WTC11 (cell line): ENCODE measurements at regions of chr1 and their contacts with region 1.

Region 1: DNA sequence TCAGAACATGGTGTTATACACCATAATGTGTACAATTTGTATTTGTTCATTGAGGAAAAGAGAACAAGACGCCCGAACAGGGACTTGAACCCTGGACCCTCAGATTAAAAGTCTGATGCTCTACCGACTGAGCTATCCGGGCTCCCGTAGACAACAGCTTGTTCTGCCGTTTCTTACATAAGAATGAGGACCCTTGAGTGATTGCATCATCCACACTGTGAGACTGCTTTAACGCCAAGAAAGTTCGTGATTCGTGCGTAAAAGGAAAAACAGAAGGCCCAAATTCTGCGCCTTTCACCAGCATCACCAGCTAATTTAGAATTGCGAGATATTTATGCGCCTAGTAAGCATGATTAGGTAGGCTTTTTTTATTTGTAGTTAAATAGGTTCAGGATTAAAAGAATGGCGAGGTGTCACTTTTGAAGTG is 9.2 kb upstream of the MDM4 start:
- DNase-seq: peak; percentile 84
- ATAC-seq: peak; percentile 75
- H3K4me3 Mint-ChIP-seq: peak overlapping the region; percentile 96
- H3K27ac Mint-ChIP-seq: peak overlapping the region; percentile 98
- H3K4me1 Mint-ChIP-seq: peaks cover 11% of the 10 kb centered on the region
- H3K27me3 Mint-ChIP-seq: peaks cover 3% of the 10 kb centered on the region; the same call in 1 of the 2 replicates
- CTCF ChIP-seq: no peak

Region 2: DNA sequence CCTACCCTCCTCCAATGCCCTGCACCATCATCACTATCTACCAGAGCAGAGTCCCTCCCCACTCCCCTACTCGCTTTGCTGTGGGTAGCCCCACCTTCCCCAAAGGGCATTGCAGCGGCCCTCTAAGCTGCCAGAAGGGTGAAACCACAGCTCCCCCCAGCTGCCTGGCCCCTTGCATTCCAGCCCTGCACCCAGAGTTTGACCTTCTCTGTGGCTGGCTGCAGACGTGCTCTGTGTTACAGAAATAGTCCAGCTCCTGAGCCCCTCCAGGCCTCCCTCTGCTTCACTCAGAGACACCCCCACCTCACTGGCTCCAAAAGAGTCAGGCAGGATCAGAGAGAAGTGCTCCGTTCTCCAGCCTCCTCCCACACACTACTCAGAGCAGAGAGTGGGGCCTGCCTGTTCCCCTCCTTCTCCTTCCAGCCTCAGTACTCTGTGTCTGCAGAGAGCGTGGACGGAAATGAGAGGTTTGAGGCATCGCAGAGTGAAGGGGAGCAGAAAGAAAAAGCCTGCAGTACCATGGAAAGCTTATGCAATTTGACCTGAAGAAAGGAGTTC is 210.5 kb before region 1 on chr1:
- CTCF ChIA-PET with region 1: no interaction called
- POLR2A ChIA-PET with region 1: no interaction called
- DNase-seq: peak; percentile 39
- ATAC-seq: peak; percentile 85
- H3K4me3 Mint-ChIP-seq: no peak overlapping the region
- H3K27ac Mint-ChIP-seq: no peak overlapping the region
- H3K4me1 Mint-ChIP-seq: peaks cover 24% of the 10 kb centered on the region
- H3K27me3 Mint-ChIP-seq: no peaks in the 10 kb centered on the region
- CTCF ChIP-seq: no peak

Region 3: DNA sequence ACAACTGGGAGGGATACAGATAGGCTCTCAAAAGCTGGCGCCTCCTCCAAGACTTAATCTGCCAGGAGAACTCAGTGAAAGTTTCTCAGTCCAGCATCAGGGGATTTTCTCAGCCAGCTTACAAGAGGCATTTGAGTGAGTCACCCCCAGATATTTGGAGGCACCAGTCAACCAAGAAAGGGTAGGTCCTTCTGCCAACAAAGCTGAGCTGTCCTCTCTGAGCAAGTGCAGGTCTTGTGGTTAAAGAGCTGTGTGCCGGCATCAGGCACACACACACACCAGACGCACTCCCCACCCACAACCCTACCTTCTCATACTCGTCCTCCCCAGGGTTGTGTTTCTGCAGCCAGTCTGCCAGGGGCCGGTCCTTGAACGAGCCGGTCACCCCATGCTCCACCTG is 68.3 kb before region 1 on chr1:
- CTCF ChIA-PET with region 1: interaction called, 906 read pairs
- POLR2A ChIA-PET with region 1: no interaction called
- DNase-seq: no peak
- ATAC-seq: no peak
- H3K4me3 Mint-ChIP-seq: no peak overlapping the region
- H3K27ac Mint-ChIP-seq: no peak overlapping the region
- H3K4me1 Mint-ChIP-seq: no peaks in the 10 kb centered on the region
- H3K27me3 Mint-ChIP-seq: no peaks in the 10 kb centered on the region
- CTCF ChIP-seq: no peak

Region 4: DNA sequence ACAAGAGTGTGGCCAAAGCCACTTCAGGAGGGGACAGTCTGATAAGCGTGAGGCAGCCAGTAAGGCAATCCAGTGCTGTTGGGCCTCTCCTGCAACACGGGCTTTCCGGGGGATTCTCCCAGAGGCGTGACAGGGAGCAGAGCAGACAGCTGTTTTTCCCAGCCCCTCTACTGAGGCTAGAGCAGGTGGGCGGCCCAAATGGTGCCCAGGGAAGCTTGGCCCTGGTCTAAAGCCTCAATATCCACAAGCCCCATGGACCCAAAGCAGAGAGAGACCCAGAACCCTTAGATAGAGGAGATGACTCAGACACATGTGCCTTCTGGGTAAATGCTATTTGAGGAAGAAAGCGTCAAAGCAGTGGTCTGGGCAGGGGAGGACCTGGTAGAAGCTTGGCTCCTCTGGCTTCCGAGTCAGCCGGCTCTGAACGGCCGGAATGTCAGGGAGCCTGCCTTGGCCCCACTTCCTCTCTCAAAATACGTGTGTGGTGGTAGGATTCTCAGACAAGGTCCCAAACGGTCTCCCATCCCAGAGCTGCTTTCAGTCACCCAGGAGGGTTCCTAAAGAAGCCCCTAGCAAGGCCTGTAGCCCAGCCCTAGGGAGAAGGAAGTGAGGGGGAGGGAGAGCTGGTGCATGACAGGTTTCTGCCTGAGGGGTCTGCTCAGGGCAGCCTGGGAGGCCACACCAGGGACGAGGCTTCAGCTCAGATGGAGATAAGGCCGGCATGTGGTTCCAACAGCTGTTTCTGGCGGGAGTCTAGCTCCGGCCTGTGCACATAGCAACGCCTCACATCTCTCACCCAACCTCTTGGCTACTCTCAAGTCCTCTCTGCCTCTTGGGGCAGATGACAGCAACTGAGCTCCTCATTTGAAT is 41.2 kb before region 1 on chr1:
- CTCF ChIA-PET with region 1: interaction called, 11 read pairs
- POLR2A ChIA-PET with region 1: no interaction called
- DNase-seq: no peak
- ATAC-seq: no peak
- H3K4me3 Mint-ChIP-seq: no peak overlapping the region
- H3K27ac Mint-ChIP-seq: peak overlapping the region; percentile 54; the same call in 1 of the 2 replicates
- H3K4me1 Mint-ChIP-seq: peaks cover 11% of the 10 kb centered on the region; the same call in 1 of the 2 replicates
- H3K27me3 Mint-ChIP-seq: no peaks in the 10 kb centered on the region
- CTCF ChIP-seq: no peak

Region 5: DNA sequence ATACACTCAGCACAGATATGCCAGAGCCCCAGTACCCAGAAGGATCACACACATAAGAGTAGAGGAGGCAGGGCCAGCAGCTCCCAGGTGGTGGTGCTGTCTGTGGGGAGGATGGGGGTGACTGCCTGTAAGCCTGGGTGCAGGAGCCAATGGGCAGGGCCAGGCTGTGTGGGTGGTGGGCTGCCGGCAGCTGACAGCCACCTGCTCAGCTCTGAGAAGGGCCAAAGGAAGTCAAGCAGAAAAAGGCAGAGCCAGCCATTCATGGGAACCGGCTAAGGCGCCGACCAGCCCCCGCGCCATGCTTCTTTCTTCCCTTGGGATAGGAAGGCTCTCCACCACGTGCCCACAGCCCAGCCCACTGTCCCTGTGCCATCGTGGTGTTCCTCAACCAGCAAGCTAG is 26.5 kb before region 1 on chr1:
- CTCF ChIA-PET with region 1: interaction called, 21 read pairs
- POLR2A ChIA-PET with region 1: interaction called, 3 read pairs
- DNase-seq: no peak
- ATAC-seq: no peak
- H3K4me3 Mint-ChIP-seq: no peak overlapping the region
- H3K27ac Mint-ChIP-seq: no peak overlapping the region
- H3K4me1 Mint-ChIP-seq: peaks cover 61% of the 10 kb centered on the region
- H3K27me3 Mint-ChIP-seq: no peaks in the 10 kb centered on the region; the same call in 1 of the 2 replicates
- CTCF ChIP-seq: no peak